ENCODE measurements at regions of chr1 and their contacts with region 1.

Region 1: DNA sequence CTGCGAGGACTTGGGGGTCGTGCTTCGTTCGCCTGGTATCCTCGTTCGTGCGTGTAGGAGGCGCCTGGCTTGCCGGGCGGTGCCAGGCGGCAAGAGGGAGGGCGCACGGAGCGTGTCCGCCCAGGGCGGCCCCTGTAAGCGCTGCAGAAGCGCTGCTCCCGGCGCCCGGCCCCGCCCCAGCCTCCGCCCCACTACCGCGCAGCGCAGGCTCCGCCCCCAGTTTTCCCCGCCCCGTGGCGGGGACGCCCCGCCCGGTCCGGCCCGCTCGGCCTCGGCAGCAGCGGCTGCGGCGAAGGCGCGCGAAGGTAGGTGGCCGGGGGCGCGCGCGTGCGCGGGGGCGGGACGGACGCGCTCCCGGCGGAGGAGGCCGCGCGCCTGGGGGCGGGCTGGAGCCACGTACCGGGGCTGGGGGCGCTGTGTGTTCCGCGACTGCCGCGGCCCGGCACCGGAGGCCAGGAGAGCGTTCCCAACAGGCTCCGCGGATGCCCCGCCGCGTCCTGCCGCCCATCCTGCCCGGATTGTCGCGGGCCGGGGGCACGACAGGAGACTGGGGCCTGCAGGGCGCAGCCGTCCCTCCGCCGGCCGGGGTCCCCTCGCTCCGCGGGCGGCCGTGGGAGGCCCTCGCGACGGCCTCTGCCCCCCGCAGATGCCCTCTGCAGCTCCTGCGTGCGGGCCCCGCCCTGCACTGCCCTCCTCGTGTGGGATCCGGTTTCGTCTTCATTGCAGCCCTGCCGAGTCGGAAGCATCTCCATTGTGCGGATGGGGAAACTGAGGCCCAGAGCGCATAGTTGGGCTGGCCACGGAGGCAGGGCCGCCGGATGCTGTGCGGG is 7.7 kb upstream of the CROCC start:
- DNase-seq: peak; percentile 99
- H3K4me3 ChIP-seq: peak overlapping the region; percentile 47 to 65 (median 57)
- H3K27ac ChIP-seq: no peak overlapping the region
- H3K4me1 ChIP-seq: peaks cover 3% of the 10 kb centered on the region
- H3K27me3 ChIP-seq: no peaks in the 10 kb centered on the region
- CTCF ChIP-seq: peak in 1 of 2 donors; percentile 27
- POLR2A ChIP-seq: peak; percentile 87

Region 2: DNA sequence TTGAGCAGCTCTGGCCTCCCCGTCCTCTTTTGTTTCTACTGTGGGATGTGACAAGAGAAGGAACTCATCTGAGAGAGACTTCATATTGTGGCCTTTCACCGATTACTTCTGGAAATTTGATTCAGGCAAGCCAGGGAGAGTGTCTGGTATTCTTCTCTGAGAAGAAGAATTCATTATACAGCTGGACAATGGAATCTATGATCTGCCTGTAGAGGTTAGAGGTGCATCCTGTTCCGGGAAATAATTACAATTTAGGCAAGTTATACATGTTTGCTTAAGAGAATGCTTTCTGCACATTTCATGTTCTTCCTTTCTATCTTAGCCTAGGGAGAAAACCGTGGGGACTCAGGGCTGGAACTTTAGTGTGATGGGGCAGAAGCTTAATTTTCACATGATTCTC is 31.0 kb before region 1 on chr1:
- CTCF ChIA-PET with region 1: no interaction called
- POLR2A ChIA-PET with region 1: no interaction called
- dilution Hi-C with region 1: no loop called
- intact Hi-C with region 1: no loop called
- DNase-seq: peak; percentile 56
- H3K4me3 ChIP-seq: no peak overlapping the region
- H3K27ac ChIP-seq: no peak overlapping the region
- H3K4me1 ChIP-seq: peaks cover 9% of the 10 kb centered on the region
- H3K27me3 ChIP-seq: peaks cover 22 to 30% of the 10 kb centered on the region in 2 experiments
- CTCF ChIP-seq: no peak
- POLR2A ChIP-seq: no peak

Region 3: DNA sequence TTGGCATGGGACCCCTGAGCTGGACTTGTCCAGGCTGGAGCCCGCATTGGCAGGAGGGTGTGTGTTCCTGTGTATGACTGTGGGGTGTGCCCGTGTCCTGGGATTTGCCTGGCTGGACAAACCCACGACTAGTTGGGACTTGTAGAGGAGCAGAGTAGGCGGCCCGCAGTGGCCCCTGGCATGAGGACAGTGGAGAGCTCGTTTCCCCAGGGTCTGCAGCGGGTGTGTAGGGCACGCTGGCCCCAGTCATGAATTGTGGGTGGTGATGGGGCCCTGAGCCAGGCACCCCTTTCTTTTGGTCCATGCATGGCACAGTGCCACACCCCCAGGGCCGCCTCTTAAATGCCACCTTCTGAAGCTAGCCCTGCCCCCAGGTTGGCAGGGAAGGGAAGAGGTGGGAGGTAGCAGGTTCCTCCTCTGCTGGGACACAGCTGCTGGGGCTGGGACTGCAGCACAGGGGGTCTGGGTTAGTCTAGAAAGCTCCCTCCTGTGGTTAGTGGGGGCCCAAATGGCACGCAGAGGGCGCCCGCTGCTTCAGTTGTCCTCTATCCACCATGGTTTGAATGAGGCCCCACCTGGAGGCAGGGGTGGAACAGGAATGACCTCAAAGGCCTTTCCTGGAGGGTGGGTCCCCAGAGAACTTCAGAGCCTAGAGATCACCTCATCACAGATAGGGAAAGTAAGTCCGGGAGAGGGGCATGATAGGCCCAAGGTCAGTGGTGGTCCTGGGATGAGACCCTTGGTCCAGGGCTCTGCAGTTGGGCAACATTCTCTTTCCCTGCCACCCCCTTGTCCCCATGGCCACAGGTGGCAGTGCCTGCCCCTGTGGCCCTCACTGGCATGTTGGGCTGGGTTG is 11.8 kb after region 1 on chr1:
- CTCF ChIA-PET with region 1: no interaction called
- POLR2A ChIA-PET with region 1: interaction called, 12 read pairs
- dilution Hi-C with region 1: no loop called
- intact Hi-C with region 1: no loop called
- DNase-seq: no peak
- H3K4me3 ChIP-seq: no peak overlapping the region
- H3K27ac ChIP-seq: no peak overlapping the region
- H3K4me1 ChIP-seq: peaks cover 7% of the 10 kb centered on the region
- H3K27me3 ChIP-seq: no peaks in the 10 kb centered on the region
- CTCF ChIP-seq: no peak
- POLR2A ChIP-seq: no peak

Region 4: DNA sequence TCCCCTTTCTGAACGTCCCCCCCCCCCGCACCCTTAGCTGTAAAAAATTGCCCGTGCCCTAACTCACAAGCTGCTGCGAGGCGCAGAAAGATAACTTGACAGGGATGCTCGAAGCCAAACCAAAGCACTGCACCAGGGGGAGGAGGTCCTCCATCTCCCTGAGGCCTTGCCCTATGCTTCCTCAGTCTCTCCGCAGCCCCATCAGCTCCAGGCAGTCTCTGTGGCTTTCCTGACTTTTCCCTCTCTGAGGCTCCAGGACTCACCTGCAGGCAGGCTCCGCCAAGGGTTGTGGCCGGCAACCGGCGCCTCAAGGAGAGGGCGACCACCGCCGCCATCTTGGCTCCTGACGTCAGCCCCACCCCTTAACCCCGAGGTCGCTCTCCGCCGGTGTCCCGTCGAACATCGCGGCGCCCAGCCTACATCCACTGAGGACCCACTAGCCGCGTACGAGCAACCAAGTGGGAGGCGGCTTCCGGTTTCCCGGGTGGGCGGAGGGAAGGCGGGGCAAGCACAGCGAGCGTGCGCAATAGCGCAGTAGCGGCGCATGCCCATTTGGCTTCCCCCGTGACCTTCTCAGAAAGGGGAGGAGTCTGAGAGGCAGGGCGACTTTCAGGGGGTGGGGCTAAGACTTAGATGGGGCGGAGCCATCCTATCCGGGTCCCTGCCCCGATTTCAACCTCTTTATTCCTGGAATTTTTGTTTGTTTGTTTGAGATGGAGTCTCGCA is 139.8 kb after region 1 on chr1 and contains the start of gene SDHB:
- CTCF ChIA-PET with region 1: interaction called, 4 read pairs
- POLR2A ChIA-PET with region 1: no interaction called
- dilution Hi-C with region 1: no loop called
- intact Hi-C with region 1: loop called (anchors 5 kb)
- DNase-seq: peak; percentile 100
- H3K4me3 ChIP-seq: peak within 1 kb of the TSS; percentile 67 to 85 (median 83)
- H3K27ac ChIP-seq: peak within 1 kb of the TSS; percentile 62
- H3K4me1 ChIP-seq: peaks cover 8% of the 10 kb centered on the region
- H3K27me3 ChIP-seq: no peaks in the 10 kb centered on the region
- CTCF ChIP-seq: no peak
- POLR2A ChIP-seq: peak; percentile 84
- total RNA-seq, gene SDHB: 90.3 and 96.2 TPM in 2 replicates

Measured in endothelial cell of umbilical vein (primary cell).